ENCODE measurements at regions of chr2 and their contacts with region 1.

Region 1: GRCh38 chr2:140465301-140465700 is 1665.5 kb downstream of the LRP1B start:
- DNase-seq: no peak
- ATAC-seq: no peak
- H3K4me3 ChIP-seq: no peak overlapping the region
- H3K27ac ChIP-seq: no peak overlapping the region
- H3K4me1 ChIP-seq: no peaks in the 10 kb centered on the region
- H3K27me3 ChIP-seq: no peaks in the 10 kb centered on the region
- CTCF ChIP-seq: no peak
- EP300 ChIP-seq: no peak
- POLR2A ChIP-seq: no peak
- RAD21 ChIP-seq: no peak

Region 2: GRCh38 chr2:140451324-140451723 is 14.0 kb before region 1 on chr2:
- CTCF ChIA-PET with region 1: no interaction called
- POLR2A ChIA-PET with region 1: no interaction called
- RAD21 ChIA-PET with region 1: no interaction called
- SMC1A ChIA-PET with region 1: no interaction called
- in situ Hi-C with region 1: no loop called
- intact Hi-C with region 1: no loop called
- DNase-seq: no peak
- ATAC-seq: no peak
- H3K4me3 ChIP-seq: no peak overlapping the region
- H3K27ac ChIP-seq: no peak overlapping the region
- H3K4me1 ChIP-seq: no peaks in the 10 kb centered on the region
- H3K27me3 ChIP-seq: no peaks in the 10 kb centered on the region
- CTCF ChIP-seq: no peak
- EP300 ChIP-seq: no peak
- POLR2A ChIP-seq: no peak
- RAD21 ChIP-seq: no peak

Region 3: GRCh38 chr2:140489193-140489592 is 23.9 kb after region 1 on chr2:
- CTCF ChIA-PET with region 1: no interaction called
- POLR2A ChIA-PET with region 1: no interaction called
- RAD21 ChIA-PET with region 1: no interaction called
- SMC1A ChIA-PET with region 1: no interaction called
- in situ Hi-C with region 1: no loop called
- intact Hi-C with region 1: no loop called
- DNase-seq: no peak
- ATAC-seq: no peak
- H3K4me3 ChIP-seq: no peak overlapping the region
- H3K27ac ChIP-seq: no peak overlapping the region
- H3K4me1 ChIP-seq: no peaks in the 10 kb centered on the region
- H3K27me3 ChIP-seq: no peaks in the 10 kb centered on the region
- CTCF ChIP-seq: no peak
- EP300 ChIP-seq: no peak
- POLR2A ChIP-seq: no peak
- RAD21 ChIP-seq: no peak

Region 4: DNA sequence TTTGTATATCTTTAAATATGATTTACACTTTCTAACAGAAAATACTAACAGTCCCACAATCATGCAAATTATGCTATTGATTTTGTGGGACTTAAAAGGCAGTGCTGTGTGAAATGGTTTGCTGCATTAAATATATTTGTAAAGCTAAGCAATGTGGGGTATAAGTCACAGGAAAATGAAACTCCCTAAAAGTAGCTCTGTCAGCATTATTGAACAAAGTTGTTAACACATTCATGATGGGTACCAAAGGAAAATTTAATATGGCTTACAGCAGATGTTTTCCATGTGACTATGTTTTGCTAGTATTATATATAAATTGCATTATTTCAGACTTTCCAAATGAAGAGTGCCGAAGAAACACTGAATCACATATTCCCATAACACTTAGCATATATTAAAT is 215.6 kb after region 1 on chr2:
- CTCF ChIA-PET with region 1: no interaction called
- POLR2A ChIA-PET with region 1: no interaction called
- RAD21 ChIA-PET with region 1: no interaction called
- SMC1A ChIA-PET with region 1: no interaction called
- in situ Hi-C with region 1: no loop called
- intact Hi-C with region 1: no loop called
- DNase-seq: no peak
- ATAC-seq: no peak
- H3K4me3 ChIP-seq: no peak overlapping the region
- H3K27ac ChIP-seq: no peak overlapping the region
- H3K4me1 ChIP-seq: no peaks in the 10 kb centered on the region
- H3K27me3 ChIP-seq: no peaks in the 10 kb centered on the region
- CTCF ChIP-seq: no peak
- EP300 ChIP-seq: no peak
- POLR2A ChIP-seq: no peak
- RAD21 ChIP-seq: no peak

Region 5: DNA sequence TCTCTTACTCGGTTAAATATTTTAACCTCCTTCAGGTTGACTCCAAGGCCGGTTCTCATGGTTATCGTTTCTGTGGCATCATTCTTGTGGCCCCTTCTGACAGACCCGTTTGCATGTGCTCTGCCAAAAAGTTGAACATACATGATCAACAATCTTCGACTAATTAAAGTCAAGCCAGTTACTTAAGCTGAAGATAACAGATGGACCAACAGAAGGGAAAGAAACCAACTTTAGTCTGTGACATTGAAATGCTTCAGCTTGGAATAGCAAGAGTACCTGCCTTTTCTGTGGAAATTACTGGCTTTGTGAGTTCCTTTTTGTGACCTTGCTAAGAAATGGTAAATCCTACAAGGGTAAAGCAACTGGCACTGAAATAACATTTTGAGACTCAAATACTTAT is 236.4 kb after region 1 on chr2:
- CTCF ChIA-PET with region 1: no interaction called
- POLR2A ChIA-PET with region 1: no interaction called
- RAD21 ChIA-PET with region 1: no interaction called
- SMC1A ChIA-PET with region 1: no interaction called
- in situ Hi-C with region 1: no loop called
- intact Hi-C with region 1: loop called (anchors 5 kb)
- DNase-seq: no peak
- ATAC-seq: no peak
- H3K4me3 ChIP-seq: no peak overlapping the region
- H3K27ac ChIP-seq: no peak overlapping the region
- H3K4me1 ChIP-seq: no peaks in the 10 kb centered on the region
- H3K27me3 ChIP-seq: no peaks in the 10 kb centered on the region
- CTCF ChIP-seq: no peak
- EP300 ChIP-seq: no peak
- POLR2A ChIP-seq: no peak
- RAD21 ChIP-seq: no peak

Measured in GM12878 (cell line).